Cardiac septum (tissue), 1 donor: ENCODE measurements at regions of chr6 and their contacts with region 1.

Region 1: DNA sequence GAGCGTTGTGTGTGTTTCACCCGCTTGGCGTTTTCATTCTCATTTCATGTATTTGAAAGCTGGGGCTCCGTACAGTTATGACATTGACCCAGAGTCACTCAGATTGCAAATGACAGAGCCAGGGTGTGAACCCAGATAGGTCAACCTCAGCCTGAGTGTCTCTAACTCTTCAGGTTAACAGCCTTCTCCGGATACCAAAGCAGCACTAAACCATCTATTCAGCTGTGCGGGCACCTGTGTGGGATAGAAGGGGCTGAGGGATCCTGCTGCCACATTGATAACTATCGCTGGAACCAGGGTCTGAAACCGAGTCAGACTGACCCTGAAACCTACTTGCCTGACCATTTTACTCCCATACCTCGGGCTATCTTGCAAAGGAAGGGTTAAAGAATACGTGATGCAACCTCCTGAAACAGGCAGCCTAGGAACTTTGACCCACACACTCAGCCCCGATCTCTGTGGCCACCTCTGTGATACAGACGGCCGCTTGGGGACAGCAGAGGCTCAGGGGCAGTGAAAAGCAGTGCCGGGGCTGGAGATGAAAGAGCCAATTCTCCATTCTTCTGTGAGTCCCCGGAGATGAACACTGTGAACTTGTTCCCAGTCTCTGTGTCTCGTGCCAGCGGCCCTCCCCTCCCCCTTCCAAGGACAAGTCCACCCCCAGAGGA is 233.5 kb upstream of the QKI start:
- DNase-seq: peak; percentile 89

Region 2: DNA sequence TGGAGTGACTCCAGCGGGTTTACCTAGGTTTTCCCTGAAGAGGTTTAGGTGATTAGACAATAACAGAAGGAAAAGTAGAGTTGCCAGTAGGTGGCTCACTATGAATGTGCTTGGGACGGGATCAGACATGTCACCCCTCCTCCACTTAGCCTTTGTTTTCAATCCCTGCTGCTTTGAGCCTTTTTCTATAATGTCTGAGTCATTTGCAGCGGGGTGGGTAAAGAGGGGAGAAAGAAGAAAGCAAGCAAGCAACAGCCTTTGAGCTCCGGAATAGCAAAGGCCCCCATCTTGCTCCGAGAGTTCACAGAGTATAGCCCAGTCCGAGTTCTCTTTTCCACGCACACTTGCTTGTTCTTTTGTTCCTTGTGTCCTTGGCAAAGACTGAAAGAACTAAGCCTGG is 324.1 kb before region 1 on chr6:
- intact Hi-C with region 1: loop called (anchors 10 kb)
- DNase-seq: no peak

Region 3: DNA sequence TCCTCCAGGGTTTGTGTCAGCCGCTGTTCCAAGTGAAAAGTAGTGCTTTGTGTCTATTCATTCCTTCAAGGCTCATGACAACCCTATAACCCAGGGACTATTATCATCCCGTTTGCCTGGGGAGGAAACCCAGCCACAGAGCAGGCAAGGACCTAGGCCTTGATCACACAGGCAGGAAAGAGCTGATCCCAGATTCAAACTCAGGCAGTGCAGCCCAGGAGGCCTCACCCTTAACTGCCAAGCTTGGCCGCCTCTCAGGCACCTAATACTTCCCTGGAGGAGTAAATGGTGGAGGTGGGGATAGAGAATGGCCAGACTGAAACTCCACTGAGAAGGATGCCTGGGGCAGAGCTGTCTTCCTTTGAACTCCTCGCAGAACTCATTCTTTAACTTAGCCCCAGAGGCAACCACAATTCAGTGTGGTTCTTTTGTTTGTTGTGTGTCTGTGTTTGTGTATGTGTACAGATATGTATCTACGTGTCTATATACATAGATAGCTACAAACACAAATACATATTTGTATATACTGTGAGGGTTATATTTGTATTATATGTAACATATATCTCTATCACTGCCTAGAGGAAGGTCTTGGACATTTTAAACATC is 18.5 kb after region 1 on chr6:
- intact Hi-C with region 1: no loop called
- DNase-seq: no peak

Region 4: DNA sequence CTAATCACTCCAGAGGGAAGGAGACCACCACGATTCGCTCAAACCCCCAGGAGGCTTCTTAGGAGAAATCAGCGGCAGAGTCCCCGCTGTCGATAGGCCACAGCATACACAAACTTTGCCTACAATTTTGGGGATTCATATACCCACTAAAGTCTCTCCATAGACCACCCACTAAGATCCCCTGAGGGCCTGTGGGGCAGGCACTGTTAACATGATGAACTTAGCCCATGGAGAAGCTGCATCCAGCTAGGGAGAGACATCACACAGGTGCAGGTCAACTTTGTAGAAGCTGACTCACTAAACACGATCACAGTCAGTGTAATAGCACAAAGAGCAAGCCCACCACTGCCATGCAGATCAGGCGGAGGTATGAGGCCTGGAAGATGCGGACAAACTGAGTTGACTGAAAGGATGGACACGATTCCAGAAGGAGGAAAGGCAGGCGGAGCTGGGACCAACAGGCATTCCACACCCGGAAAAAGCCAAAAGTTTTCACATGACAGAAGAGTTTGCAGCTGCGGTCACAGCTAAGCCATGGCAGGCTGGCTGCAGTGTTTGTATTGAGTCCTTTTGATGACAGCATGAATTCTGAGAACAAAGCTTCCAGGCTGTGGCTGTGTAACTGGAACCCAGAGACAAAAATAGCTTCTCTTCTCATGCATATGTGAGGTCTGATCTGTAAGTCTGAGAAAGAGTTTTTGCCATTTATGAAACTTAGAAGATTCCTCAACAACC is 157.8 kb after region 1 on chr6:
- intact Hi-C with region 1: loop called (anchors 5 kb)
- DNase-seq: peak; percentile 82

Region 5: GRCh38 chr6:163392533-163392932 is 211.5 kb after region 1 on chr6:
- intact Hi-C with region 1: no loop called
- DNase-seq: no peak

Region 6: DNA sequence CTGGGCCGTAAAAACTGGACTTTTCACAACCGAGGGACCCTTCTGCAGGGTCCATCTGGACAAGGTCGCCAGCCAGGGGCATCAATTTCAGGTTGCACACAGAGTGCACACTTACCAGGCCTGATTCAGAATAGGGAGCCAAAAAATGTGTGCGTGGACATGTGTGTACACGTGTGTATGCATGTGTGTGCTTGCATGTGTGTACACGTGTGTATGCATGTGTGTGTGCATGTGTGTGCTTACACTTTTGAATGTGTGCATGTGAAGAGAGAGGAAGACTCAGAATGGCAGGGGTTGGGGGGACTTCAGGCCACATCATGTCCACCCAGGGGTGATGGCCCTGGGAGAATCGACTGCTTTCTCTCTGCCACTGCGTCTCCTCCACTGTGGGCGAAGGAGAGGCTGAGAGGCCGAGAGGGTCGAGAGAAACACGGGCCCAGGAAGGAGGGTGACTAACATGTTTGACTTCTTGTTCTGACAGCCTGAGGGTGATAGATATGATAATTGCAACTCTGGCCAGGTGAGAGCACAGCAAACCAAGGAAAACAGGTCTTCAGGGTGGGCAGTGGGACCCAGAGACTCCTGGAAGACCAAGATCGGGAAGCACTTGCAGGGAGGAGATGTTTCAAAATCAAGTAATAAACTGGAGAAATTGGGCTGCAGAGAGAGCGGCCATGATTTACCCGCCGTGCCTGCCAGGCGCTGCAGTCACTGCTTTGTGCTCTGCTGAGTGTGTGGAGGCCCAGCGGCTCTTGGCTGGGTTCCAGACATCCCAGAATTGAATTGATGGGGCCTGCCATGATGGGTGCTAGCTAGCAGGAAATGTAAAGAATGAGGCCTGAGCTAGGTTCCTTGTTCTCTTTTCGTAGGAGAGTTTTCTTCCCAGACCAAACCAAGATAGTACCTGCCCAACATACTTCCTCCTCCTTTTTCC is 544.3 kb after region 1 on chr6:
- intact Hi-C with region 1: no loop called
- DNase-seq: no peak

Region 7: GRCh38 chr6:163956571-163957407 is 775.8 kb after region 1 on chr6:
- intact Hi-C with region 1: loop called (anchors 5 kb)
- DNase-seq: peak; percentile 89

Region 8: DNA sequence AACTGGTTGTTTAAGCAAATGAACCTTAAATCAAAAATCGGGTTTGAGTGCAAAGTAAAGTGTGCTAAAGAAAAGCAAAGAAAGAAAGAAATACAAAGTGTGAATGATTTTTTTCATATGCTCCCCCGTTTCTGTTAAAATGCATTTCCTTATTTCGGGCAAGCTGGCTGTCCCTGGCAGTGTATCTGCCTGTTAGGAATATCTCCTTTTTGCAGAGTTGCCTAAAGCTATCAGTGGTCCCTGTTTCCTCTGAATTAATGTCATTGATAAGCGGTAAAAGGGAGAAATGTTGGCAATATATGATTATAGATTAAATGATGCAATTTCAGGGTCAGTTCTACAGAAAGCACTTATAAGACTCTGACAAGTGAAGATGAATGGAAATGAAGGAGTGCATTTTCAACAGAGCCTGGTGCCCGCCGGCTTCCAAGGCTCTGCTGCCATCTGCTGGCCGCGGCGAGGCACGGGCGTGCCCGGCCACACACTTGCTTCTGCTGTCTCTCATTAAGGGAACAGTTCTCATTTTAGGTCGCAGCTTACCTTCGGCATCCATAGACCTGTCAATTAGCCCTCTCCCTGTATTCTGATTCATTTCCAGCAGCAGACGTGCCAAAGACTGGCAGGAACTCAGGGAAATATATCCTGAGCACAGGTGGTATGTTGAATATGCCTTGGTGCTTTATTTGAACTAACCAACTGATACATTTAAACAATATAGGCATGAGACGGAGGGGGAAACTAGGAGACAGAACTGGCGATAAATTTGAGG is 1746.5 kb after region 1 on chr6:
- intact Hi-C with region 1: loop called (anchors 10 kb)
- DNase-seq: peak; percentile 87